ENCODE measurements at regions of chr2 and their contacts with region 1.

Region 1: DNA sequence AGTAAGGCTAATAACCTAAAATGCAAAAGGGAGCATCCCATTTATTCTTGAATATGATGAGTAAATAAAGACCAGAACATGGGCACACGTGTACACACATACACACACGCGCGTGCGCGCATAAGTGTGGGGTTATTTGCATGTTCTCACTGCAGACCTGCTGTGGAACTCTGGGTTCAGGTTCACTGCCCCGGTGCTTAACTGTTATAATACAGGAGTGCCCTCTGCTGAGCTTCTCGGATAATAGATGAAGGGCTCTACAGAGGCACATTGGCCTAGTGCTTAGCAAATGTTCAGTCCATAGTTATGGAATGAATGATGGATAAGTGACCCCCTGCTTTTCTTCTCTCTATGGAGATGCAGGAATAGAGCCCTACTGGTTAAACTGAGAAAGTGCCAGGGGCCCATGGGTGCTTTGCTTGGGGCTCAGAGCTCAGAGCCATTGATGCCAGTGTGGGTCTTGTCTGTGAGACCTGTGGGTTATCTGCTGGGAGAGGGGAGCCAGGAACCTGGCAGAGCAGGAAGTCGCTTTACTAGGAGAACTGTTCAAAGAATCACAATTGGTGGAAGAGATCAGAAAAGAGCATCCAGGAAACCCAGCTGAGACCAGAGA is 3.6 kb upstream of the ARL4C start:
- DNase-seq: peak; percentile 39 to 83 (median 77)
- ATAC-seq: peak; percentile 68
- H3K4me3 ChIP-seq: peak overlapping the region; percentile 32
- H3K4me3 Mint-ChIP-seq: peak overlapping the region; percentile 44 to 91 (median 73)
- H3K27ac ChIP-seq: peak overlapping the region; percentile 91
- H3K27ac Mint-ChIP-seq: peak overlapping the region; percentile 56 to 98 (median 92)
- H3K4me1 ChIP-seq: peaks cover 24 to 30% of the 10 kb centered on the region in 2 donors
- H3K4me1 Mint-ChIP-seq: peaks cover 17 to 34% (median 31%) of the 10 kb centered on the region in 7 donors
- H3K27me3 ChIP-seq: no peaks in the 10 kb centered on the region
- H3K27me3 Mint-ChIP-seq: peaks cover 0 to 34% (median 0%) of the 10 kb centered on the region in 5 donors

Region 2: DNA sequence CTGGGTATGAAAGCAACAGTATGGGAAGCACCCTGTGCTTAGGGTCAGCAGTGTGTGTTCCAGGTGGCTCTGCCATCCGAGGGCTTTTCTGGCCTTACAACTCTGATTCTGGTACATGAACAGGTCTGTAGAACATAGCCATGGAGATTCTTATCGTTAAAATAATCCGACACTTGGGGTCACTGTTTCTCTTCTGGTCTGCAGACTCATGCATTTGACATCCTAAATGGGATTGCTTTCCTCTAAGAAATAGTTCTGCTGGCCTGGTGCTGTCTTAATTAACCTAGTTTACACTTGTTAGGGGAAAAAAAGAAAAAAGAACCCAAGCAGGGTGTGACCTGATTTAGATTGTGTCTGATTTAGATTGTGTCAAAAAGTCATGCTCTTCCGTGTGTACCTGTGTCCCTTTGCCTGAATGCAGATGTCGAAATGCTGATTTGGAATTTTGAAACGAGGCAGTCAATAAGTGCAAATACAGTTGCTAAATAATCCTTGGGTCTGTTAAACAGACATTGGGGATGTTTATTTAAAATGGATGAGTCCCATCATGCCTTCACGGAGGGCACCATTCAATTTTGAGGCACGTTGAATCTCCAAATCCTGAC is 523.7 kb before region 1 on chr2:
- CTCF ChIA-PET with region 1: interaction called, 25 read pairs
- POLR2A ChIA-PET with region 1: no interaction called
- intact Hi-C with region 1: loop called in 1 of 2 experiments (anchors 1 kb)
- DNase-seq: peak in 6 of 9 donors; percentile 29 to 62 (median 55)
- ATAC-seq: peak; percentile 60
- H3K4me3 ChIP-seq: no peak overlapping the region
- H3K4me3 Mint-ChIP-seq: no peak overlapping the region
- H3K27ac ChIP-seq: no peak overlapping the region
- H3K27ac Mint-ChIP-seq: peak overlapping the region in 2 of 9 donors; percentile 7 to 69
- H3K4me1 ChIP-seq: peaks cover 0 to 25% of the 10 kb centered on the region in 2 donors
- H3K4me1 Mint-ChIP-seq: peaks cover 3 to 37% (median 25%) of the 10 kb centered on the region in 7 donors
- H3K27me3 ChIP-seq: no peaks in the 10 kb centered on the region
- H3K27me3 Mint-ChIP-seq: peaks cover 0 to 9% (median 0%) of the 10 kb centered on the region in 5 donors

Region 3: GRCh38 chr2:234102112-234102511 is 398.4 kb before region 1 on chr2:
- CTCF ChIA-PET with region 1: interaction called, 4 read pairs
- POLR2A ChIA-PET with region 1: no interaction called
- intact Hi-C with region 1: loop called in 1 of 2 experiments (anchors 1 kb)
- DNase-seq: peak in 7 of 9 donors; percentile 16 to 64 (median 47)
- ATAC-seq: peak; percentile 73
- H3K4me3 ChIP-seq: no peak overlapping the region
- H3K4me3 Mint-ChIP-seq: peak overlapping the region in 8 of 10 donors; percentile 4 to 64 (median 28)
- H3K27ac ChIP-seq: no peak overlapping the region
- H3K27ac Mint-ChIP-seq: peak overlapping the region in 3 of 9 donors; percentile 9 to 64 (median 43)
- H3K4me1 ChIP-seq: peaks cover 36 to 37% of the 10 kb centered on the region in 2 donors
- H3K4me1 Mint-ChIP-seq: peaks cover 25 to 55% (median 43%) of the 10 kb centered on the region in 7 donors
- H3K27me3 ChIP-seq: no peaks in the 10 kb centered on the region
- H3K27me3 Mint-ChIP-seq: peaks cover 0 to 30% (median 0%) of the 10 kb centered on the region in 5 donors

Region 4: DNA sequence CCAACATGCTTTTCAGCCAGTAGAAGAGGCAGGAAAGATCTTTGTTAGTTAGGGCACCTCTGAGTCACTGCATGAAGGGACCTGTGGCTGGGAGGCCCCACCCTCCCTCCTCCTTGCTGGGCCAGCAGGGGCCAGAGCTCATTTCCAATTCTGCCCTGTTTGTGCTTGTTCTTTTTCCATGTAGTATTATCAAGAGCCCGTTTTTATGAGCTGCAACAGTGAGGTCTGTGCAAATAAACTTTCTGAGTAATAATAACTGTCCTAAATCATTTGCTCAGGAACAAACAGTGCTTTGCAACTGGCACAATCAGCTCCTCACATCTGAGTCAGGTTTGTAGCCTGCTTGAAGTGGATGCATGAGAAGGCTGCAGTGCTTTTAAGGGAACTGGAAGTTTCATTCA is 131.6 kb before region 1 on chr2:
- CTCF ChIA-PET with region 1: interaction called, 5 read pairs
- POLR2A ChIA-PET with region 1: interaction called, 6 read pairs
- intact Hi-C with region 1: loop called in 1 of 2 experiments (anchors 2 kb)
- DNase-seq: peak in 7 of 9 donors; percentile 13 to 43 (median 28)
- ATAC-seq: peak; percentile 78
- H3K4me3 ChIP-seq: no peak overlapping the region
- H3K4me3 Mint-ChIP-seq: peak overlapping the region; percentile 6 to 80 (median 46)
- H3K27ac ChIP-seq: peak overlapping the region; percentile 48
- H3K27ac Mint-ChIP-seq: peak overlapping the region; percentile 81 to 98 (median 90)
- H3K4me1 ChIP-seq: peaks cover 31 to 71% of the 10 kb centered on the region in 2 donors
- H3K4me1 Mint-ChIP-seq: peaks cover 47 to 86% (median 80%) of the 10 kb centered on the region in 7 donors
- H3K27me3 ChIP-seq: no peaks in the 10 kb centered on the region
- H3K27me3 Mint-ChIP-seq: no peaks in the 10 kb centered on the region

Region 5: DNA sequence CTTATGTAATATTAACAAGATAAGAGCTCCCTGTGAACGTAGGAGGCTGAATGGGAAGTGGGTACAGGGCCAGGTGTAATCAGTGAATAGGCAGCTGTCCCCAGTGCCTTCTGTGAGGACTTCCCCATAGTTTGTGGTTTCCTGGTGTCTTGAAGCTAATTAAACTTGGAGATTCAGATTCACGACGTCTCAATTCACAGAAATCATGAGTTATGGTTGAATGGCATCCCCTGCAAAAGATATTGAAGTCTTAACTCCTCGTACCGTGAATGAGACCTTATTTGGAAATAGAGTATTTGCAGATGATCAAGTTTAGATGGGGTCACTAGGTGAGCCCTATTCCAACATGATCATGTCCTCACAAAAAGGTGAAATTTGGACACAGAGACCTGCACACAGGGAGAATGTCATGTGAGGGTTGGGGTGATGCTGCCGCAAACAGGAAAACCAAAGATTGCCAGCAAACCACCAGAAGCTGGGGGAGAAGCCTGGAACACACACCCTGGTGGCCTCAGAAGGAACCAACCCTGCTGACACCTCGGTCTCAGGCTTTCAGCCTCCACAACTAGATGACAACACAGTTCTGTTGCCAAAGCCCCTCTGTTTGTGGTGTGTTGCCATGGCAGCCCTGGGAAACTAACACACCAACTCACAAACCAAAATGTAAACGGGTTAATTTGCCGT is 16.8 kb before region 1 on chr2:
- CTCF ChIA-PET with region 1: interaction called, 3 read pairs
- POLR2A ChIA-PET with region 1: interaction called, 30 read pairs
- intact Hi-C with region 1: loop called (anchors 1 to 2 kb)
- DNase-seq: peak; percentile 50 to 88 (median 80)
- ATAC-seq: peak; percentile 89
- H3K4me3 ChIP-seq: peak overlapping the region; percentile 28
- H3K4me3 Mint-ChIP-seq: peak overlapping the region; percentile 60 to 81 (median 67)
- H3K27ac ChIP-seq: peak overlapping the region; percentile 94
- H3K27ac Mint-ChIP-seq: peak overlapping the region; percentile 87 to 99 (median 95)
- H3K4me1 ChIP-seq: peaks cover 63 to 72% of the 10 kb centered on the region in 2 donors
- H3K4me1 Mint-ChIP-seq: peaks cover 44 to 95% (median 84%) of the 10 kb centered on the region in 7 donors
- H3K27me3 ChIP-seq: no peaks in the 10 kb centered on the region
- H3K27me3 Mint-ChIP-seq: no peaks in the 10 kb centered on the region

Measured in naive thymus-derived CD4-positive, alpha-beta T cell (primary cell).